CD4-positive, alpha-beta memory T cell (primary cell): ENCODE measurements at regions of chr3 and their contacts with region 1.

Region 1: GRCh38 chr3:122689587-122689986 is 8.9 kb downstream of the PARP14 start:
- DNase-seq: no peak
- H3K4me3 ChIP-seq: no peak overlapping the region
- H3K4me3 Mint-ChIP-seq: no peak overlapping the region
- H3K27ac ChIP-seq: no peak overlapping the region
- H3K27ac Mint-ChIP-seq: peak overlapping the region in 4 of 7 donors; percentile 38 to 90 (median 51)
- H3K4me1 ChIP-seq: peaks cover 9% of the 10 kb centered on the region
- H3K4me1 Mint-ChIP-seq: peaks cover 7 to 20% (median 17%) of the 10 kb centered on the region in 4 donors
- H3K27me3 ChIP-seq: no peaks in the 10 kb centered on the region
- H3K27me3 Mint-ChIP-seq: no peaks in the 10 kb centered on the region

Region 2: GRCh38 chr3:122555275-122556071 is 134.1 kb before region 1 on chr3:
- CTCF ChIA-PET with region 1: interaction called, 369 read pairs
- POLR2A ChIA-PET with region 1: no interaction called
- intact Hi-C with region 1: no loop called
- DNase-seq: no peak
- H3K4me3 ChIP-seq: no peak overlapping the region
- H3K4me3 Mint-ChIP-seq: no peak overlapping the region
- H3K27ac ChIP-seq: no peak overlapping the region
- H3K27ac Mint-ChIP-seq: peak overlapping the region in 1 of 7 donors; percentile 81
- H3K4me1 ChIP-seq: no peaks in the 10 kb centered on the region
- H3K4me1 Mint-ChIP-seq: peaks cover 16 to 26% (median 23%) of the 10 kb centered on the region in 4 donors
- H3K27me3 ChIP-seq: no peaks in the 10 kb centered on the region
- H3K27me3 Mint-ChIP-seq: no peaks in the 10 kb centered on the region